ENCODE measurements at regions of chr9 and their contacts with region 1.

Region 1: GRCh38 chr9:124197177-124198095 is 60.3 kb upstream of the NEK6 start:
- DNase-seq: peak; percentile 95
- ATAC-seq: peak; percentile 75
- H3K4me3 ChIP-seq: peak overlapping the region; percentile 22; the same call in 1 of the 2 replicates
- H3K27ac ChIP-seq: peak overlapping the region; percentile 99
- H3K4me1 ChIP-seq: peaks cover 58% of the 10 kb centered on the region
- H3K27me3 ChIP-seq: no peaks in the 10 kb centered on the region
- CTCF ChIP-seq: peak in 2 of 3 experiments; percentile 1 to 17; a peak in 2 of 6 replicates
- EP300 ChIP-seq: peak; percentile 84 to 92
- POLR2A ChIP-seq: peak; percentile 76
- RAD21 ChIP-seq: peak; percentile 34

Region 2: DNA sequence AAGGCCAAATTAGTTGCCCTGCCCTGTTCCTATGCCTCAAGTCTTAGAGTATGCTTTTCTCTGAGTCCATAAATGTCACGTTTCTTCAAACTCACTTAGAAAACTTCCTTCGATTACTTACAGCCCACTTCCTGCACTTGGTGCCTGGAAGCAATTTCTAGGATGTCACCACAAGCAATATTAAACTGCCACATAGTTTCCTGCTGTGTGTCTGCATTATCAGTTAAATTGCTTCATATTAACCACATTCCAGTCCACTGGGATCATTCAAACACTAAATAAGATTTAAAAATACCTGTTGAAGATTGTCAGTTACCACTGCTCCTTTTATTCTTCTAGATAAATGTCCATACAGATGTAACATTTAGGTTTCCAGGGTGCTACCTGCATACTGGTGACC is 271.6 kb before region 1 on chr9:
- CTCF ChIA-PET with region 1: no interaction called
- POLR2A ChIA-PET with region 1: no interaction called
- RAD21 ChIA-PET with region 1: no interaction called
- SMC1A ChIA-PET with region 1: no interaction called
- in situ Hi-C with region 1: no loop called
- intact Hi-C with region 1: no loop called
- DNase-seq: no peak
- ATAC-seq: no peak
- H3K4me3 ChIP-seq: 0 out of 2 replicates have a peak overlapping the region, but pooled peaks have one; percentile 1
- H3K27ac ChIP-seq: no peak overlapping the region
- H3K4me1 ChIP-seq: peaks cover 12% of the 10 kb centered on the region
- H3K27me3 ChIP-seq: no peaks in the 10 kb centered on the region
- CTCF ChIP-seq: no peak
- EP300 ChIP-seq: no peak
- POLR2A ChIP-seq: no peak
- RAD21 ChIP-seq: no peak

Region 3: GRCh38 chr9:124164811-124165210 is 32.6 kb before region 1 on chr9:
- CTCF ChIA-PET with region 1: no interaction called
- POLR2A ChIA-PET with region 1: no interaction called
- RAD21 ChIA-PET with region 1: no interaction called
- SMC1A ChIA-PET with region 1: interaction called, 10 read pairs
- in situ Hi-C with region 1: no loop called
- intact Hi-C with region 1: no loop called
- DNase-seq: no peak
- ATAC-seq: no peak
- H3K4me3 ChIP-seq: no peak overlapping the region
- H3K27ac ChIP-seq: no peak overlapping the region
- H3K4me1 ChIP-seq: no peaks in the 10 kb centered on the region
- H3K27me3 ChIP-seq: no peaks in the 10 kb centered on the region
- CTCF ChIP-seq: no peak
- EP300 ChIP-seq: no peak
- POLR2A ChIP-seq: no peak
- RAD21 ChIP-seq: no peak

Region 4: DNA sequence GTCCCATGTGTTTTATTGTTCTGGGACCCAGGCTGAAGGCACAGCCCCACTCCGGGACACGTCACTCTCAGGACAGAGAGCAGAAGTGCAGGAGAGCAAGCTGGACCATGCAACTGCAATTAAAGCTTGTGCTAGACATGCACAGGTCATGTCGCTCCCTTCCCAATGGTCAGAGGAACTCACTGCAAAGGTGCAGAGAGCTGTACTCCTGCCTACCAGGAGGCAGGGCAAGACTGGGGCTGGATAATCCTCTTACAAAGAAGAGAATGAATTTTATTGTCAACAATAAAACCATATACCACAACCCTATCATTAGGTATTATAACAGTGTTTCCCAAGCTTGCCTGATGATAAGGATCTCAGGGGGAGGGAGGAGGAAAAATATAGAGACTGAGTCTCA is 13.7 kb before region 1 on chr9:
- CTCF ChIA-PET with region 1: interaction called, 10 read pairs
- POLR2A ChIA-PET with region 1: interaction called, 9 read pairs
- RAD21 ChIA-PET with region 1: interaction called, 10 read pairs
- SMC1A ChIA-PET with region 1: interaction called, 11 read pairs
- in situ Hi-C with region 1: no loop called
- intact Hi-C with region 1: no loop called
- DNase-seq: no peak
- ATAC-seq: no peak
- H3K4me3 ChIP-seq: no peak overlapping the region
- H3K27ac ChIP-seq: no peak overlapping the region
- H3K4me1 ChIP-seq: no peaks in the 10 kb centered on the region
- H3K27me3 ChIP-seq: no peaks in the 10 kb centered on the region
- CTCF ChIP-seq: no peak
- EP300 ChIP-seq: no peak
- POLR2A ChIP-seq: no peak
- RAD21 ChIP-seq: no peak

Region 5: GRCh38 chr9:124218438-124218982 is 21.1 kb after region 1 on chr9:
- CTCF ChIA-PET with region 1: interaction called, 78 read pairs
- POLR2A ChIA-PET with region 1: interaction called, 59 read pairs
- RAD21 ChIA-PET with region 1: interaction called, 293 read pairs
- SMC1A ChIA-PET with region 1: interaction called, 249 read pairs
- in situ Hi-C with region 1: no loop called
- intact Hi-C with region 1: loop called (anchors 1 kb)
- DNase-seq: peak; percentile 92
- ATAC-seq: peak; percentile 76
- H3K4me3 ChIP-seq: no peak overlapping the region; the same call in 1 of the 2 replicates
- H3K27ac ChIP-seq: peak overlapping the region; percentile 98
- H3K4me1 ChIP-seq: peaks cover 54% of the 10 kb centered on the region
- H3K27me3 ChIP-seq: no peaks in the 10 kb centered on the region
- CTCF ChIP-seq: no peak
- EP300 ChIP-seq: peak; percentile 70 to 97; a peak in 3 of 4 replicates
- POLR2A ChIP-seq: peak; percentile 45
- RAD21 ChIP-seq: peak; percentile 41; the same call in 1 of the 2 replicates

Region 6: GRCh38 chr9:124257844-124258606 is 60.6 kb after region 1 on chr9 and contains the start of gene NEK6:
- CTCF ChIA-PET with region 1: interaction called, 6 read pairs
- POLR2A ChIA-PET with region 1: interaction called, 12 read pairs
- RAD21 ChIA-PET with region 1: interaction called, 16 read pairs
- SMC1A ChIA-PET with region 1: interaction called, 23 read pairs
- in situ Hi-C with region 1: no loop called
- intact Hi-C with region 1: loop called (anchors 1 kb)
- DNase-seq: no peak
- ATAC-seq: peak; percentile 2
- H3K4me3 ChIP-seq: peak within 1 kb of the TSS; percentile 95
- H3K27ac ChIP-seq: peak within 1 kb of the TSS; percentile 88
- H3K4me1 ChIP-seq: peaks cover 35% of the 10 kb centered on the region
- H3K27me3 ChIP-seq: no peaks in the 10 kb centered on the region
- CTCF ChIP-seq: no peak
- EP300 ChIP-seq: no peak
- POLR2A ChIP-seq: peak; percentile 72
- RAD21 ChIP-seq: no peak
- polyA plus RNA-seq, gene NEK6: 31.3 to 33.2 TPM

Region 7: DNA sequence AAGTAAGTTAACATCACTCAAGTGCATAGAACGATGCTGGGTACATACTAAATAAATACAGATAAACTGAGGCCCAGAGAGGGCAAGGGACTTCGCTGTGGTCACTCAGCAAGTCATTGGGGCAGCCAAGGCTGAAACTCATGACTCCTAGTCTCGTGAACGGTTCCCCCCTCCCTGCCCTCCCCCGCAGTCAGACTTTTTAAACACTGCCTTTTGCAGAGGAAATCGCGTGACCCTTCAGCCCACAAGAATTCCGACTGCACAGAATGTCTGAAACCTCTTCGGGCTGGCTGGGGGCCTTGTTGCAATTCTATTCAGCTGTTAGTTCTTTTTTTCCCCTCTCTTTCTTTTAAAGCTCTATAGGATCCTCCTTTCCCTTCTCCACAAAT is 88.5 kb after region 1 on chr9:
- CTCF ChIA-PET with region 1: interaction called, 27 read pairs
- POLR2A ChIA-PET with region 1: interaction called, 14 read pairs
- RAD21 ChIA-PET with region 1: interaction called, 70 read pairs
- SMC1A ChIA-PET with region 1: interaction called, 32 read pairs
- in situ Hi-C with region 1: no loop called
- intact Hi-C with region 1: loop called (anchors 1 kb)
- DNase-seq: peak; percentile 70
- ATAC-seq: peak; percentile 62
- H3K4me3 ChIP-seq: peak overlapping the region; percentile 54
- H3K27ac ChIP-seq: peak overlapping the region; percentile 97
- H3K4me1 ChIP-seq: peaks cover 72% of the 10 kb centered on the region
- H3K27me3 ChIP-seq: no peaks in the 10 kb centered on the region
- CTCF ChIP-seq: no peak
- EP300 ChIP-seq: peak; percentile 77 to 93
- POLR2A ChIP-seq: no peak
- RAD21 ChIP-seq: peak; percentile 17; the same call in 1 of the 2 replicates